ENCODE measurements at regions of chr5 and their contacts with region 1.

Region 1: GRCh38 chr5:154405078-154405792 is 40.6 kb upstream of the SAP30L start:
- DNase-seq: peak; percentile 68
- ATAC-seq: peak; percentile 98
- H3K4me3 ChIP-seq: peak overlapping the region; percentile 23; the same call in 1 of the 2 replicates
- H3K27ac ChIP-seq: peak overlapping the region; percentile 28; the same call in 1 of the 2 replicates
- H3K4me1 ChIP-seq: peaks cover 3% of the 10 kb centered on the region; the same call in 1 of the 2 replicates
- H3K27me3 ChIP-seq: no peaks in the 10 kb centered on the region
- CTCF ChIP-seq: peak; percentile 91
- POLR2A ChIP-seq: peak; percentile 44; the same call in 1 of the 2 replicates
- RAD21 ChIP-seq: peak; percentile 97

Region 2: DNA sequence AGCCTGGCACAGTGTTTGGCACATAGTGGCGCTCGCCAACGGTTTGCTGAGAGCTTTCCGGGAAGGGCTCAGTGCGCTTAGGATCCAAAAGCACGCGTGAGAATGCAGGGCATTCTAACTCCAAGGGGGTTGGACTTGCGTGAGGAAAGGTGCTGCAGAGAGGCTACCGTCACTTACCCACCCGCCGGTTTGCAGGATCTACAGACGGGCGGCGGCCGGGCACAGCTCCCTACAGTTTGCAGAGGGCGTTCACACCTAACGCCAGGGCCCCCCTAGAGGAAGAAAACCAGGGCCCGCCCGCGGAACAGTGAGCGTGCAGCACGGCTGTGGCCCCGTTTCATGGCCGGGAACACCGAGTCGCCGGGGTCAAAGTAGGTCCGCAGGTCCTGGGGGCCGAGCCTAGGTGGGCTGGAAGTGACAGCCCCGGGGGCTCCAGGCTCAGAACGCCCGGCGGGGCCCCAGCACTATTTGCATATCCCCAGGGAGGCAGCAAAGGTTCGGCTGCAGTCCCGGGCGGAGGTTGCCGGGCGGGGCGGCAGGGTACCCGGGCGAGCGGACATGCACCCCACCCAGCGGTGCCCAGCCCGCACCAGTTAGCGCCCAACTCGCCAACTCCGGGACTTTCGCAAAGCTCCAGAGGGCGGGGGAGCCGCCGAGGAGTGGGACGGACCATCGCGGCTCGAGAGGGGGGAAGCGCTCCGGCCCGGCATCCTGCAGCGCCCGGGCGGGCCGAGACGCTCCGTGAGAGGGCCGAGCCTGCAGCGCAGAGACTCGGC is 215.2 kb before region 1 on chr5:
- CTCF ChIA-PET with region 1: interaction called, 15 read pairs
- POLR2A ChIA-PET with region 1: interaction called, 3 read pairs
- dilution Hi-C with region 1: no loop called
- in situ Hi-C with region 1: loop called (anchors 5 kb)
- intact Hi-C with region 1: loop called (anchors 1 kb)
- DNase-seq: peak; percentile 66
- ATAC-seq: peak; percentile 90
- H3K4me3 ChIP-seq: peak overlapping the region; percentile 80
- H3K27ac ChIP-seq: peak overlapping the region; percentile 74
- H3K4me1 ChIP-seq: peaks cover 15% of the 10 kb centered on the region
- H3K27me3 ChIP-seq: no peaks in the 10 kb centered on the region
- CTCF ChIP-seq: peak; percentile 39
- POLR2A ChIP-seq: no peak
- RAD21 ChIP-seq: peak; percentile 26

Region 3: GRCh38 chr5:154320224-154321089 is 84.8 kb before region 1 on chr5:
- CTCF ChIA-PET with region 1: no interaction called
- POLR2A ChIA-PET with region 1: no interaction called
- dilution Hi-C with region 1: no loop called
- in situ Hi-C with region 1: no loop called
- intact Hi-C with region 1: no loop called
- DNase-seq: peak; percentile 18
- ATAC-seq: peak; percentile 56; the same call in 1 of the 2 replicates
- H3K4me3 ChIP-seq: no peak overlapping the region
- H3K27ac ChIP-seq: no peak overlapping the region
- H3K4me1 ChIP-seq: peaks cover 3% of the 10 kb centered on the region; the same call in 1 of the 2 replicates
- H3K27me3 ChIP-seq: no peaks in the 10 kb centered on the region
- CTCF ChIP-seq: no peak
- POLR2A ChIP-seq: no peak
- RAD21 ChIP-seq: no peak